HCT116 (cell line): ENCODE measurements at regions of chr11 and their contacts with region 1.

Region 1: GRCh38 chr11:9460322-9461067 is at the start of gene ZNF143:
- DNase-seq: peak; percentile 100
- ATAC-seq: peak; percentile 92
- H3K4me3 ChIP-seq: peak within 1 kb of the TSS; percentile 85 to 100
- H3K27ac ChIP-seq: peak within 1 kb of the TSS; percentile 97
- H3K4me1 ChIP-seq: peaks cover 10 to 27% of the 10 kb centered on the region in 2 experiments
- H3K27me3 ChIP-seq: no peaks in the 10 kb centered on the region
- CTCF ChIP-seq: no peak
- POLR2A ChIP-seq: no peak
- RAD21 ChIP-seq: no peak
- total RNA-seq, gene ZNF143: 27.5 TPM

Region 2: DNA sequence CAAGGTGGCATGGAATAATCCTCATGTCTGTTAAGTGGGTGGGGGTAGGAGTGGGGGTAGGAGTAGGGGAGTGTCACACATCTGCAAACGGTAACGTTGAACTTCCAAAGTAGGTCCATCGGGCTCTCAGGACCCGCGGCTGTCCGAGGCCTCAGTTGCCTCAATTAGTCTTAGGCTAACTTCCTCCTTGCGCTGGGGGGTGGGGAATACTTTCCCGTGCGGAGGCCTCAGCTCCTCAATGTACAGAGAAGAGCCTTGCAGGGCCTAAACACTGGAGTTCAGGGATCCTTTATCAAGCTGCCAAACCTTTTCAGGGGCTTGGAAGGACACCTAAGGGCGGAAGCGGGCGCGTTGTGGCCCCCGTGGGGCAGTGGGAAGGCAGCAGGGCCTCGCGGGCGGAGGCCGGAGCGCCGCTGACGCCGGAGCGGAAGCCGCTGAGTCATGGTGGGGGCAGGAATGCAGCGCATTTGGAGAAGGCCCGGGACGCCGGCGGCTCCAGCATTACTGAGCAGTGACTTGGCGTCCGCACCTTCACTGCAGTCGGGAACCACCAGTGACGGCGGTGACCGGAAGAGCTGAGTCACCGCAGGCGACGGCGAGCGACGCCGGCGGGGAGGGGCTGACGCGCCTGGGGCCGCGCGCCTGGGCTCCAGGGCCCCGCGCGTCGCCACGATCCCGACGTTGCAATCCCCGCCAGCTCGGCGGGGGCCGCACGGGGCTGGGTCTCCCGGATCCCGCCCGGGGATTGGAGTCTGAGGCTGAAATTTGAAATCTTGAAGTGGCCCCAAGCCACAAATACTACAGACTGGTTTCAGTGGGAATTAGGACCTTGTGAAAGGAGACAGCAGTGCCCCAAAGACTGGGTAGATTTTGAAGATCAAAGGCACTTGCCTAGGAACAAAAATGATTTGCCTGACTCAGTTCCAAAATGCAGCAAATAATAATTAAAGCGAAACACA is 96.3 kb before region 1 on chr11:
- CTCF ChIA-PET with region 1: no interaction called
- POLR2A ChIA-PET with region 1: interaction called, 12 read pairs
- RAD21 ChIA-PET with region 1: no interaction called
- intact Hi-C with region 1: loop called (anchors 2 kb)
- DNase-seq: peak; percentile 97
- ATAC-seq: peak; percentile 88
- H3K4me3 ChIP-seq: peak overlapping the region; percentile 34 to 44
- H3K27ac ChIP-seq: peak overlapping the region; percentile 99
- H3K4me1 ChIP-seq: peaks cover 34 to 48% of the 10 kb centered on the region in 2 experiments
- H3K27me3 ChIP-seq: no peaks in the 10 kb centered on the region
- CTCF ChIP-seq: no peak
- POLR2A ChIP-seq: peak; percentile 8
- RAD21 ChIP-seq: peak; percentile 50

Region 3: DNA sequence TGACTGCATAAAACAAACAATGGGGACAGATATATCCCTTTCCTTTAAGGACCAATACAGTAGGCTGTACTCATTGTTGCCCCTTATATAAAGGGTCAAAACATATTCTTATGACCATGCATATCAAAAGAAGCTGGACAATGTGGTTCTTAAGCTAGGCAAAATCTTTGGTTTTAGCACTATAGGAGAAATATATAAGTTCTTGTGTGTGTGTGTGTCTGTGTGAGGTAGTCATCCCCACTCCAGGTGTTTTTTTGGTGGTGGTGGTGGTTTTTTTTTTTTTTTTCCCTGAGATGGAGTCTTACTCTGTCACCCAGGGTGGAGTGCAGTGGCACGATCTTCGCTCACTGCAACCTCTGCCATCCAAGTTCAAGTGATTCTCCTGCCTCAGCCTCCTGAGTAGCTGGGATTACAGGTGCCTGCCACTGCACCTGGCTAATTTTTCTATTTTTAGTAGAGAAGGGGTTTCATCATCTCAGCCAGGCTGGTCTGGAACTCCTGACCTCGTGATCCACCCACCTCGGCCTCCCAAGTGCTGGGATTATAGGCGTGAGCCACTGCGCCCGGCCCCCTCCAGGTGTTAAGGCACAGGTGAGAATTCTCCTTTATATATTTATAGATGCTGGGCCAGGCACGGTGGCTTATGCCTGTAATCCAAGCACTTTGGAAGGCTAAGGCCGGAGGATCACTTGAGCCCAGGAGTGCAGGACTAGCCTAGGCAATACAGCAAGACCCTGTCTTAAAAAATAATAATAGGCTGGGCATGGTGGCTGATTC is 11.7 kb before region 1 on chr11:
- CTCF ChIA-PET with region 1: interaction called, 3 read pairs
- POLR2A ChIA-PET with region 1: interaction called, 14 read pairs
- RAD21 ChIA-PET with region 1: no interaction called
- intact Hi-C with region 1: no loop called
- DNase-seq: no peak
- ATAC-seq: no peak
- H3K4me3 ChIP-seq: no peak overlapping the region
- H3K27ac ChIP-seq: no peak overlapping the region
- H3K4me1 ChIP-seq: no peaks in the 10 kb centered on the region
- H3K27me3 ChIP-seq: no peaks in the 10 kb centered on the region
- CTCF ChIP-seq: no peak
- POLR2A ChIP-seq: no peak
- RAD21 ChIP-seq: no peak

Region 4: DNA sequence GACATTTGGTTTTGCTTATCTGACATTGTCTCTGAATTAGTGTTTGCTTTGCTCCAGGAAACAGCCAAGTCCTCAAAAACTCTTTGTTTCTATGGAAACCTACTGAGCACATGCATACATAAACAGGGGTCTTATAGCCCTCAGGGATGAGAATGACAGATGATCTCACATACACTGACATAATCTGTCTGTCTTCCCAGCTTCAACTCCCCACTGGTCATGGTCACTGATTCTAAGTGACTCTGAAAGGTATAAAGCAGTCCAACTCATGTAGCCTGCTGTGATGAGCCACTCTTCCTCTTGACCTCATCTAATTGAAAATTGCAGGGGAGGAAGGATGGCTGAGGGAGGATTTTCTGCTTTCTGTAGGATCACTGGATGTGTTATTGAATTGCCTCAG is 12.9 kb after region 1 on chr11:
- CTCF ChIA-PET with region 1: no interaction called
- POLR2A ChIA-PET with region 1: interaction called, 12 read pairs
- RAD21 ChIA-PET with region 1: no interaction called
- intact Hi-C with region 1: no loop called
- DNase-seq: no peak
- ATAC-seq: no peak
- H3K4me3 ChIP-seq: no peak overlapping the region
- H3K27ac ChIP-seq: no peak overlapping the region
- H3K4me1 ChIP-seq: no peaks in the 10 kb centered on the region
- H3K27me3 ChIP-seq: no peaks in the 10 kb centered on the region
- CTCF ChIP-seq: no peak
- POLR2A ChIP-seq: no peak
- RAD21 ChIP-seq: no peak

Region 5: GRCh38 chr11:9534791-9535781 is 74.6 kb after region 1 on chr11:
- CTCF ChIA-PET with region 1: no interaction called
- POLR2A ChIA-PET with region 1: no interaction called
- RAD21 ChIA-PET with region 1: no interaction called
- intact Hi-C with region 1: no loop called
- DNase-seq: peak; percentile 44
- ATAC-seq: peak; percentile 78
- H3K4me3 ChIP-seq: no peak overlapping the region
- H3K27ac ChIP-seq: no peak overlapping the region
- H3K4me1 ChIP-seq: peaks cover 5 to 14% of the 10 kb centered on the region in 2 experiments; a peak in 3 of 4 replicates
- H3K27me3 ChIP-seq: no peaks in the 10 kb centered on the region
- CTCF ChIP-seq: peak; percentile 66 to 96 (median 95)
- POLR2A ChIP-seq: no peak
- RAD21 ChIP-seq: peak; percentile 73

Region 6: DNA sequence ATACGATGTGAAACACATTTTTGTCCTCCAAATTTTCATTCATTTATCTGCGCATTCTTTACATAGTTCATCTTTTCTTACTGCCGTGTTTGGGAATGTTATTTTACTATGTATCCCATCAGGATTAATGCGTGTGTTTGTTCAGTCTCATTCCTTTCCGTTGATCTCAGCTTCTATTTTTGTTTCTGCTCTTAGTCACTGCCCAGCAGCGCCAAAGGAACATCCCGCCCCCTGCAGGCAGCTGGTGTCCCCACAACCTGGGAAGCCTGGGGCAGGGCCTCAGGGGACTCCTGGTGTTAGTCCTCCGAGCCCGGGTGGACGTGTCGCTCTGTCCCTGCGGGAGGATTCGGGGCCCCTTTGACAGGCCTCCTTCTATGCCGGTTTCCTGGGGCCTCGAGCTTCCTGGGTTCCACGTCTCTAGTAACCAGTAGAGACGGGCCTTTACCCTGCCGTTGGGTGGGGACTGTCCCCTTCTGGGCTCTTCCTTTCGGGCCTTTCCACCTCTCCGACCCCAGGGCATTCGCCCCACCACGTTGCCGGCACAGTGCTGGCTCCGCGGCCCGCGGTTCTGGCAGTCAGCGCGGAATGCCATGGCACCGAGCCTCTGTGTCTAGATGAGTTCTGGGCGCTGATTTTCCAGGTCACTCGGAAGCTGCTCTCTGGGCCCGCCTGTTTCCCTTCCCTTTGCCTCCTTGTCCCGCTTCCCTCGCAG is 152.8 kb after region 1 on chr11:
- CTCF ChIA-PET with region 1: no interaction called
- POLR2A ChIA-PET with region 1: interaction called, 5 read pairs
- RAD21 ChIA-PET with region 1: no interaction called
- intact Hi-C with region 1: loop called (anchors 5 kb)
- DNase-seq: peak; percentile 92
- ATAC-seq: peak; percentile 80
- H3K4me3 ChIP-seq: peak overlapping the region; percentile 42 to 58
- H3K27ac ChIP-seq: peak overlapping the region; percentile 92
- H3K4me1 ChIP-seq: peaks cover 29 to 61% of the 10 kb centered on the region in 2 experiments
- H3K27me3 ChIP-seq: no peaks in the 10 kb centered on the region
- CTCF ChIP-seq: peak; percentile 87 to 98 (median 94)
- POLR2A ChIP-seq: no peak
- RAD21 ChIP-seq: peak; percentile 94